Adrenal gland (tissue), 19 donors: ENCODE measurements at regions of chr1 and their contacts with region 1.

Region 1: DNA sequence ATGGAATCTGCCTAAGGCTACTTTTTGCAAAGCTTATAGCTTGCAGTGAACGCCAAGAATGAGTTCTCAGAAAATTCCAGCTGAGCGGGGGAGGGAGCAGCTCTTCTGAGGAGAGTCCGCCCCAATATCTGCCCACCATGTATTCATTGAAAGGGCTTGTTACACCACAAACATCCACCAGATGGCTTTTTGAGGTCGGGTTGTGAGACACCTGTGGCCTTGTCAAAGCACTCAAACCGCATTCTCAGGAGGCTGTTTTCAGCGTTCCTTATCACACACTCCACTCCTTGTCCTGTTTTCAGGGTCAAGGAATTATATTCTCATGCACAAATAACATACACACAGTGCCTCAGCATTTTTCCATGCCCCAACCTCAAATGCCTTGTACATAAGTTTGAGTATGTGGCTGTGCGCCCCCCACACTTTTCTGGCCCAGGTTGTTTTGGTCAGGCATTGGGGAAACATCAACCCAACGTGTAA is 3.9 kb upstream of the C4BPB start:
- DNase-seq: peak; percentile 39 to 72 (median 56)
- H3K4me3 ChIP-seq: no peak overlapping the region
- H3K27ac ChIP-seq: no peak overlapping the region
- H3K4me1 ChIP-seq: peaks cover 0 to 10% of the 10 kb centered on the region in 2 donors
- H3K27me3 ChIP-seq: no peaks in the 10 kb centered on the region
- CTCF ChIP-seq: peak; percentile 39 to 68 (median 66)
- POLR2A ChIP-seq: no peak

Region 2: GRCh38 chr1:207499573-207499972 is 414.8 kb after region 1 on chr1:
- intact Hi-C with region 1: loop called in 1 of 2 experiments (anchors 5 kb)
- DNase-seq: peak; percentile 52 to 87 (median 76)
- H3K4me3 ChIP-seq: no peak overlapping the region
- H3K27ac ChIP-seq: no peak overlapping the region
- H3K4me1 ChIP-seq: no peaks in the 10 kb centered on the region
- H3K27me3 ChIP-seq: peaks cover 23% of the 10 kb centered on the region
- CTCF ChIP-seq: peak; percentile 38 to 74 (median 66)
- POLR2A ChIP-seq: no peak